CD8-positive, alpha-beta memory T cell (primary cell): ENCODE measurements at regions of chr13 and their contacts with region 1.

Region 1: DNA sequence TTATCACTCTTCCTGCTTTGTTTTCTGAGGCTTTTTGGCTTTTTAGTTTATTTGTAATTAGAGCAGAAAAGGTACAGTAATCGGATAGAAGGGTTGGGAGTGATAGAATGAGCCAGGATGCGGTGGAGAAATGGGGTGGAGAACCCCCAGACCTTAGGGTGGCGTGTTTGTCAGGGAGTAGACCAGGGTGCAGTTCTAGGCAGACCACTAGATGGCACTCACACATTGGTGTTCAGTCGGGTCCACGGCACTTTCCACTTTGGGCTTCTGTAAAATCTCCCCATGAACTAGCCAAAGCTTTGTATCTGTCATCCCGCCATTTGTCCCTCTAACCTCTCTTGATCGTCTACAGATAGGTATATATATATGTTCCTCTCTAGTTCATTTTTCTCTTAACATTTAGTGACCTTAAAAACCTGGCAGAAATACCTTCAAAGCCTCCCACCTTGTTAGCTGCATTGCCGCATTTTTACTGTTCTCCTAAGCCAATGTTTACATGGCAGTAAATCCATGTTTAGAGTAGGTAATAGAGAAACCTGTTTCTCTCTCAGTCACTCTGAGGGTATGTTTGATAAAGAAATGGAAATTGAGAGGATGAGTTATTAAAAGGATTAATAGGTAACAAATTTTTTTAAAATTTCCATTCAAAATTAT is 154.9 kb downstream of the TM9SF2 start:
- DNase-seq: peak; percentile 73 to 86 (median 76)
- H3K4me3 ChIP-seq: peak overlapping the region; percentile 52
- H3K4me3 Mint-ChIP-seq: peak overlapping the region; percentile 78 to 92 (median 81)
- H3K27ac ChIP-seq: no peak overlapping the region
- H3K27ac Mint-ChIP-seq: peak overlapping the region; percentile 80 to 98 (median 92)
- H3K4me1 ChIP-seq: peaks cover 51% of the 10 kb centered on the region
- H3K4me1 Mint-ChIP-seq: peaks cover 43 to 51% (median 50%) of the 10 kb centered on the region in 3 donors
- H3K27me3 ChIP-seq: no peaks in the 10 kb centered on the region
- H3K27me3 Mint-ChIP-seq: peaks cover 0 to 1% of the 10 kb centered on the region in 2 donors

Region 2: DNA sequence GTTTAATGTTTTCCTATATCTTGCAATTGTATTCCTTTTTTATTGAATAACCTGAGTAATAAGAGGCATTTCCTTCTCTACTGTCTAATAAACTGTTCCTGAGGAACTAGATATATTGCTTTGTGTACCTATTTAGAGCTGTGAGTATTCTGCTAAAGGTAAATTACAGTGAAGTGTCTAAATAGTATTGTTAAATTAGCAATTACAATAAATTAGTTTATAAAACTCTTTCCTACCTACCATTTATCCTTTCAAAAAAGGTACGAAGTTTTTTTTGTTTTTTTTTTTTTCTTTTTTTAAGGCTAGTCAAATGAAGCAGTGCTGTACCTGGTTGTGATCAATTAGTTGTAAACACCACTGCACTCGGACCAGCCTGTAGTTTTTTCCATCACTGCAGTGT is 120.2 kb before region 1 on chr13:
- CTCF ChIA-PET with region 1: no interaction called
- POLR2A ChIA-PET with region 1: no interaction called
- DNase-seq: no peak
- H3K4me3 ChIP-seq: no peak overlapping the region
- H3K4me3 Mint-ChIP-seq: no peak overlapping the region
- H3K27ac ChIP-seq: no peak overlapping the region
- H3K27ac Mint-ChIP-seq: peak overlapping the region in 1 of 8 donors; percentile 36
- H3K4me1 ChIP-seq: peaks cover 9% of the 10 kb centered on the region
- H3K4me1 Mint-ChIP-seq: peaks cover 18 to 45% (median 36%) of the 10 kb centered on the region in 3 donors
- H3K27me3 ChIP-seq: no peaks in the 10 kb centered on the region
- H3K27me3 Mint-ChIP-seq: peaks cover 0 to 1% of the 10 kb centered on the region in 2 donors

Region 3: DNA sequence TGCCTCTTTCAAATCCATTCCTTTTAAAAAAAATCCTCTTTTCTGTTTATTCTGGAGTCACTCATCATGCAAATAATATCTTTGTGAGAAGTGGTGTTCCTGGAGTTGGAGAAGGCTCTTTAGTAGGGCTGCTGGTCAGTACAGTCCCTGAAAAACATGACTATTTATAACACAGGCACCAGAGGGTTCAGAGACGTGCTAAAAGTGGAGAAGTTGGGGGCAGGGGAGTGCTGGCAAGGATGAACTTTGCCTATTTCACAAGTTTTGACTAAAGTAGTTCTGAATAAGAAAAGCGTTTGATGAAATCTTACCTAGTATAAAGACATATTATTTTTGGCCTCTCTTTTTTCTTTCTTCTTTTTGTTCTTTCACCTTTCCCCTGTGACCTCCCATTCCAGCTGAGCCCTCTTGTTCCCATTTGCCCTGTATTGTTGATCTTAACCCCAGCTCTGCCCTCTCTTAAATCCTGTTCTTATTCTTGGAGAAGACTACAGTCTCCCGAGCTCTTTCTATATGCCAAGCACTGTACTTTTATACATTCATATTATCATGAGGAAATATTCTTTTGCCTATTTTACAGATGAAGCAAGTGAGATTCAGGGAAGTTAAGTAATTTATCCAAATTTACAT is 25.8 kb before region 1 on chr13:
- CTCF ChIA-PET with region 1: no interaction called
- POLR2A ChIA-PET with region 1: no interaction called
- DNase-seq: no peak
- H3K4me3 ChIP-seq: no peak overlapping the region
- H3K4me3 Mint-ChIP-seq: no peak overlapping the region
- H3K27ac ChIP-seq: no peak overlapping the region
- H3K27ac Mint-ChIP-seq: peak overlapping the region in 1 of 8 donors; percentile 59
- H3K4me1 ChIP-seq: no peaks in the 10 kb centered on the region
- H3K4me1 Mint-ChIP-seq: peaks cover 11 to 21% (median 20%) of the 10 kb centered on the region in 3 donors
- H3K27me3 ChIP-seq: no peaks in the 10 kb centered on the region
- H3K27me3 Mint-ChIP-seq: peaks cover 0 to 2% of the 10 kb centered on the region in 2 donors

Region 4: GRCh38 chr13:99792079-99792921 is 136.1 kb after region 1 on chr13:
- CTCF ChIA-PET with region 1: no interaction called
- POLR2A ChIA-PET with region 1: no interaction called
- DNase-seq: no peak
- H3K4me3 ChIP-seq: no peak overlapping the region
- H3K4me3 Mint-ChIP-seq: no peak overlapping the region
- H3K27ac ChIP-seq: no peak overlapping the region
- H3K27ac Mint-ChIP-seq: no peak overlapping the region
- H3K4me1 ChIP-seq: no peaks in the 10 kb centered on the region
- H3K4me1 Mint-ChIP-seq: peaks cover 0 to 5% (median 0%) of the 10 kb centered on the region in 3 donors
- H3K27me3 ChIP-seq: no peaks in the 10 kb centered on the region
- H3K27me3 Mint-ChIP-seq: no peaks in the 10 kb centered on the region

Region 5: DNA sequence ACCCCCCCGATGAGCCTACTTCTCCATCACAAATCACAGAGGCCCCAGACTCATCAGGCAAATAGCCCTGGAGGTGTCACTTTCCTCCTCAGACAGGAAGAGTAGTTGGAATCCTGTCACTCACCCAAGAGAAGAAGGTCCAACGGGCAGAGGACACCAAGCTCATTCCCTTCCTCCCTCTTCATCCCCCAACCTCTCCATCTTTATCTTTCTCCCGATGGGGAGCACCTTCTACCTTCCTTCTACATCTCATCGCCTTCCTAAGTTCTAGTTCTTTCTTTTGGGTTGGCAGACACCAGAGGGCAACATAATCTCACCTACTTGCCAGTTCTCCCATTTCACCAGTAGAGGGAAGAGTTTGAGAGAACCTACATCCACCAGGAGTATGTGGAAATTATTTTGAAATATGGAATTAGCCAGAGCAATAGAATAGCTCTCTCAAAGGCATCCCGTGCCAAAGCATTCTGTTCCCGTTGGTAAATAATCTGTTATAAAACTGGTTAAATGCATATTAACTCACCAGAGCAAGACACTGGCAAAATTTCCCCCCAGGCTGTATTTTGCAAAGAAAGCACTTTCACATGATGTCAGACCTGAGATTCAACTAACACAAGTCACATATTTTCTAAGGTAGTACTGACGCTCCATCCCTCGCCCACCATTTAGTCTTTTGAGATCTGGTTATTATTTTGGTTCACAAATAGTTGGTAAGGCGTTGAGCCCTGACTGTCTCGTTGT is 260.3 kb after region 1 on chr13:
- CTCF ChIA-PET with region 1: interaction called, 19 read pairs
- POLR2A ChIA-PET with region 1: no interaction called
- DNase-seq: peak in 2 of 5 donors; percentile 29 to 45
- H3K4me3 ChIP-seq: no peak overlapping the region
- H3K4me3 Mint-ChIP-seq: no peak overlapping the region
- H3K27ac ChIP-seq: no peak overlapping the region
- H3K27ac Mint-ChIP-seq: no peak overlapping the region
- H3K4me1 ChIP-seq: peaks cover 11% of the 10 kb centered on the region
- H3K4me1 Mint-ChIP-seq: peaks cover 9 to 16% (median 16%) of the 10 kb centered on the region in 3 donors
- H3K27me3 ChIP-seq: no peaks in the 10 kb centered on the region
- H3K27me3 Mint-ChIP-seq: peaks cover 0 to 5% of the 10 kb centered on the region in 2 donors

Region 6: DNA sequence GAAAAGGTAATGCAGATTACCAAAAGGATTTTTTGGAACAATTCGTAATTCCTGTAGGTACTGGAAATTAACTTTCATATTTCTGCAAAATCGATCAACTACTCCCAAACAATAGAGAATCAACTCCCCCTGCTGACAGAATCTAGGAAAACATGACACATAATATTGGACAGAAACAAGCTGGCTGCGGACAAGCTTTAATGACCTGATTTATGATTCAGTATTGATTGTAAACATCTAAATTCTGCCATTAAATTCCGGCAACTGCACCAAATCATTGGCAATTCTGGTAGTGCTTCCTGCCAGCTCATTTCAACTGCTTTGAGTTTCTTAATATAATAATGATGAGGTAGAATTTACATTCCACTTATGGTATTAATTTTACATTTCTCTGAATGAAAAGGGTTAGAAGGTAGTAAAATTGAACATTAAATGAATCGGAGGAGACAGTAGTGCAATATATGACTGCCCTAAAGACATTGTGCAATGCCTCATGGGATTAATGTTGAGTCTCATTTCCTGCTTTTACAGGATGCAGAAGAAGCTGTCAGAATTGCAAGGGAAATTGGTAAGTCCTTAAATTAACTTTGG is 579.2 kb after region 1 on chr13:
- CTCF ChIA-PET with region 1: interaction called, 48 read pairs
- POLR2A ChIA-PET with region 1: interaction called, 3 read pairs
- DNase-seq: peak in 2 of 5 donors; percentile 28 to 43
- H3K4me3 ChIP-seq: no peak overlapping the region
- H3K4me3 Mint-ChIP-seq: no peak overlapping the region
- H3K27ac ChIP-seq: no peak overlapping the region
- H3K27ac Mint-ChIP-seq: no peak overlapping the region
- H3K4me1 ChIP-seq: peaks cover 4% of the 10 kb centered on the region
- H3K4me1 Mint-ChIP-seq: peaks cover 4 to 6% (median 6%) of the 10 kb centered on the region in 3 donors
- H3K27me3 ChIP-seq: no peaks in the 10 kb centered on the region
- H3K27me3 Mint-ChIP-seq: no peaks in the 10 kb centered on the region

Region 7: DNA sequence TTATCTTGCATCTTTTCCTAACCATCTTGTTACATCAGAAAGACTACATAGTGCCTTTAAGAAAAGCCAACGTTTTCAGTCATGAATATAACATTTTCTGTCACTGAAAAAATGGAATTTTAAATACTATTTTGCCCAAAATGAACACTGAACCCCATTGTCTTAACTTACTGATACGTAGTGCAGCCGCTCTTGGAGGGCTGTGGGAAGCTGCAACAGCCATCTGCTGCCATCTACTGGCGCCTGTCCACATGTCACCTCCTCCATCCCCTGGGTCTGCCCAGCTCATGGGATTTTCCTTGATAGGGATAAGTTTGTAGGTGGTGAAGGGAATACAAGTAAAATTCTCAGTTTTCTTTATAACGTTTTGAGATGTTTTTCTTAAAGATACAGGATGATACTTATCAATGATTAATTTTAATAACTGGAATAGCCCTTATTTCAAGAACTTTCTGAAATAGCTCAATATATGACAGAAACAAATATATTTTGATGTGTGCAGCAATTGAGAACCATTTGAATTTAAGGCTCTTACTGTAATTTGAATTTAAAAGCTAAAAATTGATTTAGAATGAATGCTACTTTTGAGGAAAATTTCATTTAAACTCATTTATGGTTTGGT is 858.7 kb after region 1 on chr13:
- CTCF ChIA-PET with region 1: interaction called, 76 read pairs
- POLR2A ChIA-PET with region 1: interaction called, 4 read pairs
- DNase-seq: peak; percentile 54 to 78 (median 60)
- H3K4me3 ChIP-seq: no peak overlapping the region
- H3K4me3 Mint-ChIP-seq: no peak overlapping the region
- H3K27ac ChIP-seq: no peak overlapping the region
- H3K27ac Mint-ChIP-seq: no peak overlapping the region
- H3K4me1 ChIP-seq: peaks cover 7% of the 10 kb centered on the region
- H3K4me1 Mint-ChIP-seq: peaks cover 9 to 18% (median 17%) of the 10 kb centered on the region in 3 donors
- H3K27me3 ChIP-seq: no peaks in the 10 kb centered on the region
- H3K27me3 Mint-ChIP-seq: no peaks in the 10 kb centered on the region

Region 8: GRCh38 chr13:101127741-101128353 is 1471.6 kb after region 1 on chr13:
- CTCF ChIA-PET with region 1: interaction called, 10 read pairs
- POLR2A ChIA-PET with region 1: no interaction called
- DNase-seq: peak in 1 of 5 donors; percentile 12
- H3K4me3 ChIP-seq: no peak overlapping the region
- H3K4me3 Mint-ChIP-seq: no peak overlapping the region
- H3K27ac ChIP-seq: no peak overlapping the region
- H3K27ac Mint-ChIP-seq: no peak overlapping the region
- H3K4me1 ChIP-seq: no peaks in the 10 kb centered on the region
- H3K4me1 Mint-ChIP-seq: no peaks in the 10 kb centered on the region
- H3K27me3 ChIP-seq: no peaks in the 10 kb centered on the region
- H3K27me3 Mint-ChIP-seq: peaks cover 4 to 11% of the 10 kb centered on the region in 2 donors